Posterior vena cava (tissue), 2 donors: ENCODE measurements at regions of chrX and their contacts with region 1.

Region 1: GRCh38 chrX:23907498-23908218 is at the starts of genes APOO and CXorf58:
- DNase-seq: peak; percentile 97
- total RNA-seq, gene APOO: 13.7 to 13.9 TPM
- total RNA-seq, gene CXorf58: 0.24 TPM in 1 of 2 donors, not detected in the other

Region 2: DNA sequence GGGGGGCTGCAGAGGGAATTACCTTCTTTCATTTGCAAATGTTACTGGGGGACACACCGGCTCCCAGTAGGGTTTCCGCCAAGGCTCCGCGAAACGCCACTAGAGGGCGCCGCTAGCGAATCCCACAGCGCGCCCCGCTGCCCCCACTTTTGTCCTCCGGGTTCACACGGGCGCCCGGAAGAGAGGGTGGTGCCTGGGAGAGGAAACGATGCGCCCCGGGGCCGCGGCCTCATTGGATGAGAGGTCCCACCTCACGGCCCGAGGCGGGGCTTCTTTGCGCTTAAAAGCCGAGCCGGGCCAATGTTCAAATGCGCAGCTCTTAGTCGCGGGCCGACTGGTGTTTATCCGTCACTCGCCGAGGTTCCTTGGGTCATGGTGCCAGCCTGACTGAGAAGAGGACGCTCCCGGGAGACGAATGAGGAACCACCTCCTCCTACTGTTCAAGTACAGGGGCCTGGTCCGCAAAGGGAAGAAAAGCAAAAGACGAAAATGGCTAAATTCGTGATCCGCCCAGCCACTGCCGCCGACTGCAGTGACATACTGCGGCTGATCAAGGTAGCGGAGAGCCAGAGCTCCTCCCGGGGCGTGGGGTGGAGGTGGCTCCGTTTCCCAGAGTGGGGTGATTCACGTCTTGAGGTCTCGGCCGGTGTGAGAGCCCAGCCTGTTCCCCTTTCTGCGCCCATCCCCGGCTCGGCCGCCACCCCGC is 124.6 kb before region 1 on chrX and contains the start of gene SAT1:
- intact Hi-C with region 1: loop called in 1 of 2 experiments (anchors 10 kb)
- DNase-seq: peak; percentile 98
- total RNA-seq, gene SAT1: 154 to 192 TPM